WTC11 (cell line): ENCODE measurements at regions of chr2 and their contacts with region 1.

Region 1: GRCh38 chr2:121076885-121077549 is 208.0 kb downstream of the TFCP2L1 start:
- DNase-seq: peak; percentile 93
- ATAC-seq: peak; percentile 33
- H3K4me3 Mint-ChIP-seq: peak overlapping the region; percentile 72
- H3K27ac Mint-ChIP-seq: no peak overlapping the region
- H3K4me1 Mint-ChIP-seq: peaks cover 16% of the 10 kb centered on the region
- H3K27me3 Mint-ChIP-seq: peaks cover 48% of the 10 kb centered on the region
- CTCF ChIP-seq: peak; percentile 96

Region 2: GRCh38 chr2:120735746-120736170 is 341.3 kb before region 1 on chr2 and contains the start of gene GLI2:
- CTCF ChIA-PET with region 1: interaction called, 5 read pairs
- POLR2A ChIA-PET with region 1: interaction called, 33 read pairs
- DNase-seq: peak; percentile 87
- ATAC-seq: peak; percentile 52
- H3K4me3 Mint-ChIP-seq: peak within 1 kb of the TSS; percentile 88
- H3K27ac Mint-ChIP-seq: no peak within 1 kb of the TSS
- H3K4me1 Mint-ChIP-seq: peaks cover 43% of the 10 kb centered on the region
- H3K27me3 Mint-ChIP-seq: no peaks in the 10 kb centered on the region
- CTCF ChIP-seq: peak; percentile 50; the same call in 1 of the 2 replicates
- total RNA-seq, gene GLI2: 45.9 to 60.9 TPM (median 48.6 TPM) in 3 replicates

Region 3: GRCh38 chr2:121088251-121089165 is 11.5 kb after region 1 on chr2:
- CTCF ChIA-PET with region 1: interaction called, 18 read pairs
- POLR2A ChIA-PET with region 1: interaction called, 6 read pairs
- DNase-seq: no peak
- ATAC-seq: no peak
- H3K4me3 Mint-ChIP-seq: no peak overlapping the region
- H3K27ac Mint-ChIP-seq: no peak overlapping the region
- H3K4me1 Mint-ChIP-seq: no peaks in the 10 kb centered on the region
- H3K27me3 Mint-ChIP-seq: peaks cover 13% of the 10 kb centered on the region
- CTCF ChIP-seq: no peak

Region 4: DNA sequence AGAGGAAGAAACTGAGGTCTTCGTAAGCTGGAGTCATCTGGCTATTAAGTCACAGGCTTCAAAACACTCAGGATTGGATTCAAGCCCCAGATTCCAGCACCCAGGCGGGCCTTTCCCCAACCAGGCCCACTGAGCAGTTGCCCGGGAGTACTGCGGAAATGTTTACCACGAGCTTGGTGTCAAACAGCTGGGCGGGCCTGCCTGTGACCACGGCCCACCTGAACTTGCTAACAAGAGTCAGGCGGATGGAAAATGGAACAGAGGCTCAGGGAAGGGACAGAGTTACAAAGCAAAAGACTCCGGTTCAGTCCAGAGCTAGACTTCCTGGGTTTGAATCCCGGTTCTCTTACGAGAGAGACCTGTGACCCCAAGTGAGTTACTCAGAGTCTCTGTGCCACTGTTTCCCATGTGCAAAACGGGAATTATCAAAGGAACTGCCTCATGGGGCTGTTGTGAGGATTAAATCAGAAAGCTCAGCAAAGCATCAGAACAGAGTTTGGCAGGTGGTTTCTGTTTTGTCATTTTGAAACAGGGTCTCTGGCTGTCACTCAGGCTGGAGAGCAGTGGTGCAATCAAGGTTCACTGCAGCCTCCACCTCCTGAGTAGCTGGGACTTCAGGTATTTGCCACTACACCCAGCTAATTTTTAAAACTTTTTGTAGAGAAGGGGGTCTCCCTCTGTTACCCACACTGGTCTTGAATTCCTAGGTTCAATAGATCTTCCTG is 257.0 kb after region 1 on chr2:
- CTCF ChIA-PET with region 1: interaction called, 11 read pairs
- POLR2A ChIA-PET with region 1: no interaction called
- DNase-seq: no peak
- ATAC-seq: no peak
- H3K4me3 Mint-ChIP-seq: no peak overlapping the region
- H3K27ac Mint-ChIP-seq: no peak overlapping the region
- H3K4me1 Mint-ChIP-seq: peaks cover 22% of the 10 kb centered on the region
- H3K27me3 Mint-ChIP-seq: no peaks in the 10 kb centered on the region
- CTCF ChIP-seq: no peak

Region 5: GRCh38 chr2:121530212-121530705 is 453.2 kb after region 1 on chr2:
- CTCF ChIA-PET with region 1: no interaction called
- POLR2A ChIA-PET with region 1: interaction called, 16 read pairs
- DNase-seq: peak; percentile 80
- ATAC-seq: peak; percentile 57
- H3K4me3 Mint-ChIP-seq: peak overlapping the region; percentile 91
- H3K27ac Mint-ChIP-seq: peak overlapping the region; percentile 100
- H3K4me1 Mint-ChIP-seq: peaks cover 47% of the 10 kb centered on the region
- H3K27me3 Mint-ChIP-seq: no peaks in the 10 kb centered on the region
- CTCF ChIP-seq: no peak